ENCODE measurements at regions of chr2 and their contacts with region 1.

Region 1: DNA sequence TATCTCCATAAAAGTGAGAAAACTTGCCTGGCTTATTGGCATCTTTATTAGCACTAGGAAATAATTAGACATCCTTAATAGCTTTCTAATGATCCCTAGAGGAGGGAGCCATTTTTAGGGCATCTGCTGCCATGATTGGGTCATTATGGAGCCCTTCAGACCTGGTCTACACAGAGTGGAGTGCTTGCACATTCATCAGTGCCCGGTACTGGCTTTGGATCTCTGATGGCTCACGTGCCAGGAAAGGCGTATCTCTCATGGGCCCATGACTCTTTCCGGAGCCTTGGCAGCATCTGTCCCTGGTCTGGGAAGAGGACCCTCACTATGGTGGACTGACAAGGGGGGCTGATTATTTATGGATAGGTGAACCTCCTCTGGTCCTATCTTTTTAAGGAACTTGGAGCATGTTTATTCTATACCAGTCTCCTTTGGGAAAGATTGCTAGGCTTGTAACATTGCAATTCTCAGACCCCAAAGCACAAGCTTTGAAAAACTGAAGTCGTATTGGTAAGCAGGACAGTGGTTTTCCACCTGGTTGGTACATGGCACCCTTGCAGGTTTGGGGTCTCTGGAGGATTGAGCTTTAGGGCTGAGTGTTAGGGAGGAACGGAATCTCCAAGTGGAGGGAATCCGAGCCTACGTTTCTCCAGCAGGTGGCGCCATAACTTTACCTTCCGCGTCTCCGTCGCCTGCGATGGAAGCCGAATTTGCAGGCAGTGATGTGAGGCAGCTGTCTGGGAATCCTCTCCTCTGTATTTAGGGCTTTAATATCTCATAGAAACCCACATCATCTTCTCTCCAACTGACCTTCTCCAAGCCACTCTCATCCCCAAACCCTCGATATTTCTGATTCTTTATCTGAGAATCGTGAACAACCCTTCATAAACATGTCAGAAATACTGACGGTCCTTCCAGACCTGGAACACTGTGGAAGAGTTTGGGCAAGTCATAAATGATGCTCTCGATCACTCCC is 27.8 kb downstream of the SIX2 start:
- DNase-seq: peak in 2 of 3 donors; percentile 74 to 87
- ATAC-seq: peak; percentile 76
- H3K4me3 ChIP-seq: no peak overlapping the region
- H3K4me1 ChIP-seq: no peaks in the 10 kb centered on the region
- CTCF ChIP-seq: peak; percentile 47

Region 2: DNA sequence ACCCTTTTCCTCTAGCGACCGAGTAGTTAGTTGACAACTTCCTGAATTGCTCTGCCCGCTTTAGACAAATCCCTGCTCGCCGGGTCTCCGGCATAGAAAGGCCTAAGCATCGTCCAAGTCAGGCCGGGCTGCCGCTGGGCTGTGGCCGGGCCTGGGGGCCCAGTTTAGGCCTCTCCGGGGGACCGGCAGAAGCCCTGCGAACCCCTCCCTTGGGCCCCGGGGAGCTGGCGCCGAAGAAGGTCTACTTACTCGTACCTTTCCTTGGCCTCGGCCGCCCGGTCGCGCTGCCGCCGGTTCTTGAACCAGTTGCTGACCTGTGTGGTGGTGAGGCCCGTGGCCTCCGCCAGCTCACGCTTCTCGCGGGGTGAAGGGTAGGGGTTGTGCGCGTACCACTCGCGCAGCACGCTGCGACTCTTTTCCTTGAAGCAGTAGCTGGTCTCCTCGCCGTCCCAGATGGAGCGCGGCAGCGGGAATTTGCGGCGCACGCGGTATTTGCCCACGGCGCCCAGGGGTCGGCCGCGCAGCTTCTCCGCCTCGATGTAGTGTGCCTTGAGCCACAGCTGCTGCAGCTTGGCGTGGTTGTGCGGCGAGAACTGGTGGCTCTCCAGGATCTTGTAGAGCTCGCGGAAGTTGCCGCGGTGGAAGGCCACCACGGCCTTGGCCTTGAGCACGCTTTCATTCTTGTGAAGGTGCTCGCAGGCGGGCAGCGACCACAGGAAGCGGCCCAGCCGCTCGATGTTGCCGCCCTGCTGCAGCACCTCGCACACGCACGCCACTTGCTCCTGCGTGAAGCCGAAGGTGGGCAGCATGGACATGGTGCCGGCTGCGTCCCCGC is 27.1 kb after region 1 on chr2:
- intact Hi-C with region 1: loop called in 1 of 2 experiments (anchors 1 kb)
- DNase-seq: peak in 2 of 3 donors; percentile 41 to 54
- ATAC-seq: no peak
- H3K4me3 ChIP-seq: no peak overlapping the region
- H3K4me1 ChIP-seq: peaks cover 29% of the 10 kb centered on the region
- CTCF ChIP-seq: no peak

Region 3: DNA sequence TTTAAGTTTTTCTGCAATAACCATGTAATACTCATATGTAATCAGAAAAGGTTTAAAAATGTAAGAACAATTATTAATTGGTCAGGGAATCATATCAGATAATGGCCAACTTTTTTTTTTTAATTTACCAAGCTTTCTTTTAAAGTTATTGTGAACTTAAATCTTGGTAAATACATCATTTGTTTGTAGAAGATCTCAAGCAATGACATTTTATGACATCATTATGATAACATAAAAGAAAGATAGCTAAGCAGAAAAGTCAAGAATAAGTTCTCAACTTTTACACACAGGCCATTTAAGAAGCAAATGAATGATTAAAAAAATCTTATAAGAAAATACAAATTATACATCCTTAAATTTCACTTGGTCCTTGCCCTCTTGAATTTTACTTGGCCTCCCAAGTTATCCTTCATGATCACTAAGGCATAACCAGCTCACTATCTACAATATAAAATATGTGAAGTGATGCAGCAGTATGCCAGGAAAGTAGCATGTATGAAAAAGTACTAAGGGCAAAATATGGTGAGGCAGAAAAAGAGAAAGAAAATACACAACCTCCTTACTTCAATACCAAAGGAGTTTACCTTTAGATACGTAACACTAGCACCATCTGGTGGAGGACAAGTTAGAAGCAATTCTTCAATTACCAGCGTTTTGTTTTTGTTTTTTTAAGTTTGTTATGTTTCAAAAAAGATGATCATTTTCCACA is 513.0 kb after region 1 on chr2:
- intact Hi-C with region 1: loop called (anchors 2 to 5 kb)
- DNase-seq: peak in 1 of 3 donors; percentile 55
- ATAC-seq: peak; percentile 52
- H3K4me3 ChIP-seq: no peak overlapping the region
- H3K4me1 ChIP-seq: no peaks in the 10 kb centered on the region
- CTCF ChIP-seq: peak; percentile 32